ENCODE measurements at regions of chr1 and their contacts with region 1.

Region 1: GRCh38 chr1:1115786-1116700 is at the start of gene C1orf159:
- DNase-seq: peak; percentile 97 to 100
- H3K4me3 ChIP-seq: peak within 1 kb of the TSS; percentile 65 to 100
- H3K27ac ChIP-seq: peak within 1 kb of the TSS; percentile 35 to 63
- H3K4me1 ChIP-seq: peaks cover 4 to 7% of the 10 kb centered on the region in 2 donors
- H3K27me3 ChIP-seq: no peaks in the 10 kb centered on the region
- CTCF ChIP-seq: no peak
- total RNA-seq, gene C1orf159: 23.7 TPM

Region 2: DNA sequence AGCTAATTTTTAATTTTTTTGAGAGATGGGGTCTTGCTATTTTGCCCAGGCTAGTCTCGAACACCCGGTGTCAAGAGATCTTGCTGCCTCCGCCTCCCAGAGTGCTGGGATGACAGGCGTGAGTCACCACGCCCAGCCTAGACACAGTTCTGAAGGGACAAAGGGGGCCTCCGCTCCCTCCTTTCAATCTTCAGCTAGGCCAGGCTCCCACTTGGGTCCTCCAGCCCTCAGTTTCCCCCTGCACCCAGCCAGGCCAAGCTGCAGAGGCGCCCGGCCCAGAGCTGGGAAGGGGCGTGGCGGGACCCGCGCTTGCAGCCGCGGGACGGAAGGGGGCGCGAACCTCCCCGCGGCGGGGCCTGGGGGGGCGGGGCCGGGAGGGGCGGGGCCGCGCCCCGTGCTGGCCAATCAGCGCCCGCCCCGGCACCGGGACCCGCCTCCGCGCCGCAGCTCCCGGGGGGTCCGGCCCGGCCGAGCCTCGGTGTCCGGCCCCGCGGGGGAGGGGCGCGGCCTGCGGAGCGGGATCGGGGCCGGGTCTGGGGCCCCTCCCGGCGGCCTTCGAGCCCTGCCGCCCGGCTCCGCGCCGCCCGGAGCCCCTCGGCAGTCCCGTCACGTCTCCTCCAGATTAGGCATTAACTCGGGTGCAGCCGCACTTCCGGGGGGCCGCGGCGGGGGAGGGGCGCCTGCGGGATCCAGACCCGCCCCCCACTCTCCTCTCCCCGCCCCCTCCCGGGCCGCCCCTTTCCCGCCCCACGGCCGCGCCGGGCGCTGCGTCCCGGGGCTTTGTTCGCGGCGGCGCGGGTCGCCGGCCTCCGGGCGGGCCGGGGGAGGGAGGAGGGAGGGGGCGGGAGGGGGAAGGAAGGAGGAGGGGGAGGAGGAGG is 96.7 kb before region 1 on chr1:
- intact Hi-C with region 1: loop called (anchors 1 kb)
- DNase-seq: peak in 1 of 2 donors; percentile 87
- H3K4me3 ChIP-seq: peak overlapping the region; percentile 93 to 95
- H3K27ac ChIP-seq: peak overlapping the region; percentile 87 to 93
- H3K4me1 ChIP-seq: peaks cover 10% of the 10 kb centered on the region in 2 donors
- H3K27me3 ChIP-seq: no peaks in the 10 kb centered on the region
- CTCF ChIP-seq: peak; percentile 28 to 54 (median 48)

Region 3: GRCh38 chr1:1137256-1138045 is 21.4 kb after region 1 on chr1:
- intact Hi-C with region 1: no loop called
- DNase-seq: no peak
- H3K4me3 ChIP-seq: no peak overlapping the region
- H3K27ac ChIP-seq: no peak overlapping the region
- H3K4me1 ChIP-seq: no peaks in the 10 kb centered on the region
- H3K27me3 ChIP-seq: no peaks in the 10 kb centered on the region
- CTCF ChIP-seq: no peak

Region 4: DNA sequence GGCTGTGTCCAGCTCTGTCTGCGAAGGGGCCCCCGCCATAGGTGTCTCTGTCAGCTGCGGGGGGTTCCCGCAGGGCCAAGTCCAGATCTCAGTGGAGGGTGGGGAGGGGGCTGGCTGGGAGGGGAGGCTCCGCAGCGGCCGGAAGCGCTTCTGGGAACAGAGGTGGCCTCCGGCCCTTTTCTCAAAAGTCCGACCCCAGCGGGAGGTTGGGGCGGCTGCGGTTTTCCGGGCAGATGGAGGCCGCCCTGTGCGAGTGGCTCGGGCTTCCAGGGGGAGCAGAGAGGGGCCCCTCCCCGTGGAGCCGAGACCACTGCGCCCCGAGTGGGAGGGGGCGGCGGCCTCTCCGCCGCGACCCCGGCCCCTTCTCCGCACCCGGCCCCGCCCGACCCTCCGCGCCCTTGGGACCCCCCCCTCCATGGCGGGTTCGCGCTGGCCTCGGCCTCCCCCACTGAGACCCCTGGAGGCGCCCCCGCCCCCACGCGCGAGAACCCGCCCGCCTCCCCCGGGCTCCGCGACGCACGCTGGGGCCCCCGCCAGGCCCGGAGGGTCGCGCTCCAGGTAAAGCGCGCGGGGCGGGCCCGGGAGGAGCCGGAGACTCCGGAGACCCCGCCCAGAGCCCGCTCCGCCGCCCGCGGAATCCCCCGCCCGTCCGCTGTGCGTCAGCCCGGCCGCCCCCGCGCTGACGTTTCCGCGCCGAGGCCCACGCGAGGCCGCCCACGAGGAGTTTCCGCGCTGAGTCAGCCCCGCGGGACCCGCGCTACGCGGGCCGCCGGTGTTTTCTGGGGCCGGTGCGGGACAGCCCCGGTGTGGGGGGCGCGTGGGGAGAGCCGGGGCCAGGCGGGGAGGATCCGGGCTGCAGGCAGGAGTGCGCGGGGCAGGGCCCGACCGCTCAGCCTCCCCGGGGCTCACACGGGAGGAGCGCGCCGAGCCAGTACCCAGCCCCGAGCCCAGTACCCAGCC is 85.1 kb after region 1 on chr1:
- intact Hi-C with region 1: no loop called
- DNase-seq: no peak
- H3K4me3 ChIP-seq: peak overlapping the region; percentile 36 to 67
- H3K27ac ChIP-seq: no peak overlapping the region
- H3K4me1 ChIP-seq: peaks cover 0 to 7% of the 10 kb centered on the region in 2 donors
- H3K27me3 ChIP-seq: peaks cover 8% of the 10 kb centered on the region
- CTCF ChIP-seq: no peak

Region 5: GRCh38 chr1:1273512-1274298 is 157.7 kb after region 1 on chr1 and contains the start of gene UBE2J2:
- intact Hi-C with region 1: loop called (anchors 1 kb)
- DNase-seq: peak; percentile 79 to 97
- H3K4me3 ChIP-seq: peak within 1 kb of the TSS; percentile 97 to 98
- H3K27ac ChIP-seq: peak within 1 kb of the TSS; percentile 67 to 76
- H3K4me1 ChIP-seq: peaks cover 29 to 39% of the 10 kb centered on the region in 2 donors
- H3K27me3 ChIP-seq: no peaks in the 10 kb centered on the region
- CTCF ChIP-seq: peak in 1 of 3 experiments; percentile 12
- total RNA-seq, gene UBE2J2: 25.2 TPM

Region 6: GRCh38 chr1:1406817-1407635 is 291.0 kb after region 1 on chr1 and contains the start of gene MRPL20:
- intact Hi-C with region 1: loop called (anchors 10 kb)
- DNase-seq: peak; percentile 76 to 97
- H3K4me3 ChIP-seq: peak within 1 kb of the TSS; percentile 68 to 93
- H3K27ac ChIP-seq: peak within 1 kb of the TSS; percentile 72 to 77
- H3K4me1 ChIP-seq: peaks cover 7 to 25% of the 10 kb centered on the region in 2 donors
- H3K27me3 ChIP-seq: no peaks in the 10 kb centered on the region
- CTCF ChIP-seq: no peak
- total RNA-seq, gene MRPL20: 63.4 TPM